CD4-positive, alpha-beta memory T cell (primary cell): ENCODE measurements at regions of chr19 and their contacts with region 1.

Region 1: GRCh38 chr19:38891771-38892170 is 7.6 kb downstream of the SIRT2 start:
- DNase-seq: no peak
- H3K4me3 ChIP-seq: no peak overlapping the region
- H3K4me3 Mint-ChIP-seq: no peak overlapping the region
- H3K27ac ChIP-seq: no peak overlapping the region
- H3K27ac Mint-ChIP-seq: peak overlapping the region in 1 of 7 donors; percentile 13
- H3K4me1 ChIP-seq: peaks cover 4% of the 10 kb centered on the region
- H3K4me1 Mint-ChIP-seq: peaks cover 2 to 13% (median 5%) of the 10 kb centered on the region in 4 donors
- H3K27me3 ChIP-seq: no peaks in the 10 kb centered on the region
- H3K27me3 Mint-ChIP-seq: no peaks in the 10 kb centered on the region

Region 2: DNA sequence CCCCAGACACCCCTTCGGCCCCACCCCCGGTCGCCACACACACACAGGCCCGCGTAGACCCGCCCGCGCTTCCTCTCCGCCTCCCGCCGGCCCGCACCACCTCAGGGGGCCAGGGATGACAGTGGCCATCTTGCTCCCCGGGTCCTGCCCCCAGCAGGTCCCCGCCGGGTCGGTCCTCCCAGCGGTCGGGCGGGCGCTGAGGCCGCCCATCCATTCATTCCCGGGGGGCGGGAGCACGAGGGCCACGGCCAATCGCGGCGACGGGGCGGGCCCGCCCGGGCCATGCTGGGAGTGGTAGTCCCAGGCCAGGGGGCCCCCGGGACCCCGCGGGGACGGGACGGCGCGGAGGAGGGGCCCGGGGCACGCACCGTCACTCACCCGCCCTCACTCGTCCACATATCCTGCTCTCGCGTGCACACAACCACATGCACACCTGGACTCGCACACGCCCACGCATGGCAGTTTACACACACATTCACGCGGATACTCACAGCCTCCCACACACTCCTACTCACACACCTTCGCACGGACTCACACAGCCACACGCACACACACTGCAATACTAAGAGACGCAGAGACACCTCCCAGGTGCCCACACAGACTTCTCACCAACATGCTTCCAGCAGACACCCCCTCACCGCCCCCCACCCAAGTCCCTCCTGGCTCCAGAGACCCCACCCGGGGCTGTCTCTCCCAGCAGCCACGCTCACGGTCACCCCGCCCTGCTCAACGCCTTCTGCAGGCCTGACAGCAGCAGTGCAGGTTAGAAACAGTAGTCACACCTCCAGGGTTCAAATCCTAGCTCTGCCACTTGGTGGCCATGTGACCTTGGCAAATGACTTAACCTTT is 667.5 kb before region 1 on chr19 and contains the start of gene DPF1:
- CTCF ChIA-PET with region 1: no interaction called
- POLR2A ChIA-PET with region 1: no interaction called
- intact Hi-C with region 1: no loop called
- DNase-seq: peak in 4 of 5 donors; percentile 22 to 44 (median 35)
- H3K4me3 ChIP-seq: peak within 1 kb of the TSS in 1 of 2 donors; percentile 31
- H3K4me3 Mint-ChIP-seq: peak within 1 kb of the TSS; percentile 68 to 92 (median 86)
- H3K27ac ChIP-seq: no peak within 1 kb of the TSS
- H3K27ac Mint-ChIP-seq: peak within 1 kb of the TSS in 2 of 7 donors; percentile 1 to 73
- H3K4me1 ChIP-seq: peaks cover 19% of the 10 kb centered on the region
- H3K4me1 Mint-ChIP-seq: peaks cover 10 to 30% (median 22%) of the 10 kb centered on the region in 4 donors
- H3K27me3 ChIP-seq: peaks cover 40% of the 10 kb centered on the region
- H3K27me3 Mint-ChIP-seq: peaks cover 42 to 43% of the 10 kb centered on the region in 2 donors
- total RNA-seq, gene DPF1: not detected

Region 3: GRCh38 chr19:38729653-38730469 is 161.9 kb before region 1 on chr19:
- CTCF ChIA-PET with region 1: interaction called, 12 read pairs
- POLR2A ChIA-PET with region 1: no interaction called
- intact Hi-C with region 1: loop called (anchors 5 kb)
- DNase-seq: peak; percentile 67 to 73 (median 70)
- H3K4me3 ChIP-seq: no peak overlapping the region
- H3K4me3 Mint-ChIP-seq: no peak overlapping the region
- H3K27ac ChIP-seq: no peak overlapping the region
- H3K27ac Mint-ChIP-seq: peak overlapping the region; percentile 19 to 88 (median 61)
- H3K4me1 ChIP-seq: peaks cover 20% of the 10 kb centered on the region
- H3K4me1 Mint-ChIP-seq: peaks cover 16 to 62% (median 29%) of the 10 kb centered on the region in 4 donors
- H3K27me3 ChIP-seq: no peaks in the 10 kb centered on the region
- H3K27me3 Mint-ChIP-seq: no peaks in the 10 kb centered on the region

Region 4: GRCh38 chr19:38736036-38736412 is 155.7 kb before region 1 on chr19:
- CTCF ChIA-PET with region 1: interaction called, 12 read pairs
- POLR2A ChIA-PET with region 1: no interaction called
- intact Hi-C with region 1: no loop called
- DNase-seq: peak; percentile 57 to 80 (median 59)
- H3K4me3 ChIP-seq: peak overlapping the region in 1 of 2 donors; percentile 14
- H3K4me3 Mint-ChIP-seq: peak overlapping the region; percentile 27 to 77 (median 60)
- H3K27ac ChIP-seq: peak overlapping the region; percentile 30
- H3K27ac Mint-ChIP-seq: peak overlapping the region in 4 of 7 donors; percentile 30 to 88 (median 74)
- H3K4me1 ChIP-seq: peaks cover 57% of the 10 kb centered on the region
- H3K4me1 Mint-ChIP-seq: peaks cover 24 to 69% (median 42%) of the 10 kb centered on the region in 4 donors
- H3K27me3 ChIP-seq: no peaks in the 10 kb centered on the region
- H3K27me3 Mint-ChIP-seq: peaks cover 0 to 2% of the 10 kb centered on the region in 2 donors

Region 5: DNA sequence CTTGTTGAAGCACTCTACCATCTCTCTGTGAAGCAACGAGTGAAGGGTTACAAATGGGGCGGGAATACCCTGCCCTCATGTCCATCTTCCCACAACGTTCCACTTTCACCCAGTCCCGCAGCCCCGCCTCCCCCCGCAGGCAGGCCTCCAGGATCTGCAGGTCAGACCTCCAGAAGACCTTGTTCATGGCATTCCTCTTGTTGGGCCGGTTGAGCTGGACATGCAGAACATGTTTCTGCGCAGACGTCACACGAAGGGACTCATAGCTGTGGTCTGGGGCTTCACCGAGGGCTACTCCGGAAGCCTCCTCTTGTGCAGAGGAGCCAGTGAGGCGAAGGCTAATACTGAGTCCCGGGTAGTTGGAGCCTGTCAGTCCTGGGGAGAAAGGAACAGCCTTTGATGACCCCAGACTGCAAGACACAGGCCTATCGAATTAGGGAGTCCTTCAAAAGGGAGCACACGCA is 60.6 kb before region 1 on chr19:
- CTCF ChIA-PET with region 1: interaction called, 14 read pairs
- POLR2A ChIA-PET with region 1: interaction called, 9 read pairs
- intact Hi-C with region 1: no loop called
- DNase-seq: peak in 1 of 5 donors; percentile 57
- H3K4me3 ChIP-seq: peak overlapping the region; percentile 82 to 87
- H3K4me3 Mint-ChIP-seq: peak overlapping the region; percentile 88 to 95 (median 94)
- H3K27ac ChIP-seq: peak overlapping the region; percentile 79
- H3K27ac Mint-ChIP-seq: peak overlapping the region; percentile 92 to 98 (median 95)
- H3K4me1 ChIP-seq: peaks cover 22% of the 10 kb centered on the region
- H3K4me1 Mint-ChIP-seq: peaks cover 17 to 50% (median 32%) of the 10 kb centered on the region in 4 donors
- H3K27me3 ChIP-seq: no peaks in the 10 kb centered on the region
- H3K27me3 Mint-ChIP-seq: no peaks in the 10 kb centered on the region

Region 6: DNA sequence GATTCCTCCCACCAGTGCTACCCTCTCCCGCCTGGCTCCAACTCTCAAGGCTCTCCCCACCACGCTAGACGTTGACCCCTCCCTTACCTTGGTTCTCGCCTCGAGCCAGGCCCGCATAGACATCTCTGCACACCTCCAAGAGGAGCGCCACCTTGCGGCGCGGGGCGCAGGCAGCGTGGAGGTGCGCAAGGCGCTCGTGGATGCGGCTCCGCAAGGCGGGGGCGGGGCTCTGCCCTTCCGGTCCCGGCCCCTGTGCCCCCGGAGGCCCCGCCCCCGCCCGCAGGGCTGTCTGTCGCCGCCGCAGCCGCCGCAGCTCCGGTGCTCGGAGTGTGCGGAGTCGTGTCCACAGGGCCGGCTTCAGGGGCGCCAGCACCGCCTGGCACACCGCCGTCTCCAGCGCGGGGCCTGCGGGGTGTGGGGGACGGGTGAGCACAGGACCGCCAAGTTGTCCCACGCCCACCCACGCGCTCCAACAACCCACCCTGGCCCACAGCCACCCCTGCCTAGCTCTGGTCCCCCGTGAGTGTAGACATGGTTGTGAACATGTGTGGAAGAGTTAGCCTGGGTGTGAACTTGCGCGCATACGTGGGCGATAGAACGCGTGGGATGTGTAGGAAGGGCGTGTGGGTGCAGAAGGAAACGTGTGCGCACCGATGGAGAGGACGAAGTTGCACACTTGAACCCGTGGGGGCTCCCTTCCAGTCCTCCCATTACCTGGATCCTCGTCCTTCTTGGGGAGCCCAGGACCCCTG is 21.7 kb before region 1 on chr19:
- CTCF ChIA-PET with region 1: interaction called, 31 read pairs
- POLR2A ChIA-PET with region 1: interaction called, 7 read pairs
- intact Hi-C with region 1: no loop called
- DNase-seq: peak; percentile 92 to 96 (median 93)
- H3K4me3 ChIP-seq: peak overlapping the region; percentile 29 to 60
- H3K4me3 Mint-ChIP-seq: peak overlapping the region; percentile 88 to 94 (median 91)
- H3K27ac ChIP-seq: peak overlapping the region; percentile 66
- H3K27ac Mint-ChIP-seq: peak overlapping the region; percentile 83 to 97 (median 94)
- H3K4me1 ChIP-seq: peaks cover 40% of the 10 kb centered on the region
- H3K4me1 Mint-ChIP-seq: peaks cover 23 to 53% (median 38%) of the 10 kb centered on the region in 4 donors
- H3K27me3 ChIP-seq: no peaks in the 10 kb centered on the region
- H3K27me3 Mint-ChIP-seq: no peaks in the 10 kb centered on the region

Region 7: GRCh38 chr19:38877781-38878574 is 13.8 kb before region 1 on chr19 and contains the start of gene RINL:
- CTCF ChIA-PET with region 1: interaction called, 52 read pairs
- POLR2A ChIA-PET with region 1: interaction called, 20 read pairs
- intact Hi-C with region 1: no loop called
- DNase-seq: peak; percentile 68 to 82 (median 72)
- H3K4me3 ChIP-seq: peak within 1 kb of the TSS; percentile 41 to 73
- H3K4me3 Mint-ChIP-seq: peak within 1 kb of the TSS; percentile 79 to 94 (median 88)
- H3K27ac ChIP-seq: peak within 1 kb of the TSS; percentile 89
- H3K27ac Mint-ChIP-seq: peak within 1 kb of the TSS; percentile 96 to 99 (median 97)
- H3K4me1 ChIP-seq: peaks cover 49% of the 10 kb centered on the region
- H3K4me1 Mint-ChIP-seq: peaks cover 21 to 40% (median 30%) of the 10 kb centered on the region in 4 donors
- H3K27me3 ChIP-seq: no peaks in the 10 kb centered on the region
- H3K27me3 Mint-ChIP-seq: no peaks in the 10 kb centered on the region
- total RNA-seq, gene RINL: 64.4 to 65.9 TPM